Left ventricle myocardium superior (tissue), 1 donor: ENCODE measurements at regions of chr2 and their contacts with region 1.

Region 1: DNA sequence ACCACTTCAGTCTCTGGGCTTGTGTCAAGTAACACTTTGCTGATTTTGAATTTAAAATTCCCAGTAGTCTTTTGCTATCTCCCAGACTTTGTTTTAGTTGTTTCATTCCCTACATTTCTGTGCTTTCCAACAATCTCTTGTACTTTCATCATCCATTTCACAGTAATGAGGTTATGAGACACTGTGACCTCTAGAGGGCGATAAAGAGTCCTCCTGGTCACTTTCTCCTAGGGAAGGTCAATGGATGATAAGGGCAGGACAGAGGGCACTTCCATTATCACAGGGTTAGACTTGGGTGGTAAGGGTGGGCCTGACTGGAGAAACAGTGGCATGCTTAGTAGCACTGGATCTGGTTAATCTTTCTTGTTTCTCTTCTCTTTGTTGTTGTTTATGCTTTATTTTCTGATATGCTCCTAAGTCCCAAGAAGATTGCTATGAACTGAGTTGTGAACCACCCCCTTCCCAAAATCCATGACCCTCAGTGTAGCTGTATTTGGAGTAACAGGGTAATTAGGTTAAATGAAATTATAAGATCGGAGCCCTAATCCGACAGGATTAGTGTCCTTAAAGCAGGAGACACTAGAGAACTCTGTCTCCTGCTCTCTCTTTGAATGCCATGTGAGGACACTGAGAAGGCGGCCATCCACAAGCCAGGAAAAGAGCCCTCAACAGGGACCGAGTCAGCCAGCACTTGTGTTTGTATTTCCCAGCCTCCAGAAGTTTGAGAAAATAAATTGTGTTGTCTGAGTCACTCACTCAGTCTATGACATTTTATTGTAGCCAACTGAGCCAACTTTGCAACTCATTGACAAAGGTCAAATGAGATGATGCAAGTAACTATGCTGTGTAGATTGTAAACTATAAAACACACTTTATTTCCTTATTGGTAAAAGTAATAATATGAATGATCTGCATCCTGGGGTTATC is 779.2 kb downstream of the CNTNAP5 start:
- DNase-seq: no peak
- ATAC-seq: no peak

Region 2: DNA sequence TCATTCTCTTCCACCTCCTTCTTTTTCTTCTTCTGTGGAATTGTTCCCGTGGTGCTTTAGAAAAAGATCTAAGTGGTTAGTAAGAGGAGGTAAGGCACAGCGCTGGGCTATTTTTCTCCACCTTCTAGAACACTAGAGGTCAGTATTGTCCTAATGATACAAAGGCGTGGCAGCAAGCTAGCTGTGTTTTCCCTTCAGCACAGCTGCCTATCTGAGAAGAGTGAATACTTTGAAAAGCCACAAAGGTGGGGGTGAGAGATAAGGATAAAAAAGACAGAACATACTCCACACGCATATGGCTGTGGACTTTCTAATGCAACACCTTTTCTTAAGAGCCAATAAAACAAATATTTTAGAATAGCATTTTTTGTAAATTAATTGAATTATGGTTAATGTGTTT is 777.1 kb before region 1 on chr2:
- intact Hi-C with region 1: loop called (anchors 10 kb)
- DNase-seq: no peak
- ATAC-seq: peak; percentile 38

Region 3: GRCh38 chr2:124898827-124899226 is 94.5 kb after region 1 on chr2:
- intact Hi-C with region 1: no loop called
- DNase-seq: no peak
- ATAC-seq: no peak

Region 4: GRCh38 chr2:125172181-125172580 is 367.9 kb after region 1 on chr2:
- intact Hi-C with region 1: no loop called
- DNase-seq: no peak
- ATAC-seq: no peak